ENCODE measurements at regions of chr4 and their contacts with region 1.

Region 1: DNA sequence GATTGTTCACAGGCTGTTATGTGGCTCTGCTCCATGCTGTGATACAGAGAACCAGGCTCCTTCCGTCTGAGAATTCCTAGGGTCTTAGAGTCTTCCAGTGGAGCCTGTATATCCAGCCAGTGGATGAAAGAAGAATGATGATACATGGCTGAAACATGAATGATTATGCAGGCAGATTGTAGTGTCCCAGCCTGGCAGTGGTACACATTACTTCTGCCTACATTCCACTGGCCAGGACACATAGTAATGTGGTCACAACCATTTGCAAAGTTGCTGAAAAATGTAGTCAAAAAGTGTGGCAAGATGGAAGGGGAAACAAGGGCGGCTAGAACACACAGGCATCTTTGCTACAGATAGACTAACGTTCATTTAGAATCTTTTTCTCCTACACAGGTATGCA is 4.5 kb upstream of the GBA3 start:
- ATAC-seq: peak in 2 of 8 experiments; percentile 55 to 70
- H3K4me3 ChIP-seq: no peak overlapping the region
- H3K27ac ChIP-seq: no peak overlapping the region
- H3K4me1 ChIP-seq: no peaks in the 10 kb centered on the region

Region 2: DNA sequence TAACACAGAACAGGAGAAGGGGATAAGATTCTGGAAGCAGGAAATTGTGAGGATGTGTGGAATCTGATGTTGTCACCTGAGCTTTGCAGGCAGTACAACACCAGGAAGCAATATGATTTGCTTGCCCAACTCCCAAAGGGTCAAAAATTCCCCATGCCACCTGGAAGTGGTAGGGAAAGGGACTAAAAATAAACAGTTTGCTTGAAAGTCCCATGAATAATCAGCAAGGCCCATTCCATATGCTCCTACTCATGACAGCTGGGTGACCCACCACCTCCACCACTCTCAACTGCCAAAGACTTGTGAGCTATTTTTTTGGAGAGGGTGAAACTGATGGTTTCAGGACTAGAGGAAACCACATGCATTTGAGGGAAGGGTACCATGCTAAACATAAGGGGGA is 908.1 kb before region 1 on chr4:
- in situ Hi-C with region 1: loop called in 5 of 9 experiments (anchors 10 to 25 kb)
- ATAC-seq: no peak
- H3K4me3 ChIP-seq: no peak overlapping the region
- H3K27ac ChIP-seq: no peak overlapping the region
- H3K4me1 ChIP-seq: no peaks in the 10 kb centered on the region

Region 3: GRCh38 chr4:22427675-22428074 is 260.6 kb before region 1 on chr4:
- in situ Hi-C with region 1: loop called (anchors 10 to 25 kb)
- ATAC-seq: no peak
- H3K4me3 ChIP-seq: no peak overlapping the region
- H3K27ac ChIP-seq: no peak overlapping the region
- H3K4me1 ChIP-seq: no peaks in the 10 kb centered on the region

Region 4: GRCh38 chr4:22978656-22979055 is 290.4 kb after region 1 on chr4:
- in situ Hi-C with region 1: no loop called
- ATAC-seq: no peak
- H3K4me3 ChIP-seq: no peak overlapping the region
- H3K27ac ChIP-seq: no peak overlapping the region
- H3K4me1 ChIP-seq: no peaks in the 10 kb centered on the region

Region 5: GRCh38 chr4:23877758-23878229 is 1189.6 kb after region 1 on chr4:
- in situ Hi-C with region 1: no loop called
- ATAC-seq: peak in 2 of 8 experiments; percentile 41 to 61
- H3K4me3 ChIP-seq: no peak overlapping the region
- H3K27ac ChIP-seq: no peak overlapping the region
- H3K4me1 ChIP-seq: peaks cover 20 to 36% of the 10 kb centered on the region in 2 donors

Measured in motor neuron (in vitro differentiated cells).